IMR-90 (cell line): ENCODE measurements at regions of chr1 and their contacts with region 1.

Region 1: DNA sequence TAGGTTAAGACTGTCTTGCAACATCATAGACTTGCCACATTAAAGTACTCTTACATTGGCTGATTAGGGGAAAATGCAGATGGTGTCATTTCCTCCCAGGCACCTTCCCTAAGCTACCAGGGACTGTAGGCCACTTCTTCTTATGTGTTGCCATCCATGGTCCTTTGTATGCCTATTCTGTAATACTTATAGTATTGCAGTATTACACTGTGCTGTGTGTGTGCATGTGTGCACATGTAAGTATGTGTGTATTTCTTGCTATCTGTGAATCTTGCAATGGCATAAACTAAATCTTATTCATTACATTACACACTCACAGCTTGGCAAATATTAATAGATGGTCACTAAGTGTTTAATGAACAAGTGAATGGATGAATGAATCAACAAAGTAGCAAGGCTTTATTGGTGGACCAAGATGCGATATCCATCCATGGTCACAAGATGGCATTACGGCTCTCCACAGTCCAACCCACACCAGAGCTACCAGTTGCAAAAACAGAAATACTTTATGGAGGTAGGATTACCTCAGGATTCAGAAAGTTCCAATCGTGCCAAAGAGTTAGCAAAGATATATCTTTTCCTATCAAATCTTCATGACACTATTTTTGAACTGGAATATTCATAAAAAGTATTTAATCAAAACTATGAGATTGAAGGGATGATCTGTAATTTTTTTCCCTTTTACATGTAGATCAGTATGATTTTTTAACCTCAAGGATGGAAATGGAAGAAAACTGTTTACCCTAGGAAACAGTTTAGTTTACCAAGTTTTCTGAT is 160.2 kb downstream of the DENND1B start:
- DNase-seq: peak; percentile 51
- ATAC-seq: peak; percentile 91
- H3K4me3 ChIP-seq: no peak overlapping the region
- H3K27ac ChIP-seq: no peak overlapping the region
- H3K4me1 ChIP-seq: 0 out of 2 replicates have a peak, but pooled peaks cover 2% of the 10 kb centered on the region
- H3K27me3 ChIP-seq: no peaks in the 10 kb centered on the region
- CTCF ChIP-seq: peak; percentile 66
- POLR2A ChIP-seq: no peak
- RAD21 ChIP-seq: peak; percentile 78

Region 2: GRCh38 chr1:197725044-197725443 is 109.9 kb after region 1 on chr1:
- CTCF ChIA-PET with region 1: no interaction called
- POLR2A ChIA-PET with region 1: no interaction called
- dilution Hi-C with region 1: no loop called
- in situ Hi-C with region 1: no loop called
- intact Hi-C with region 1: no loop called
- DNase-seq: peak; percentile 31
- ATAC-seq: no peak
- H3K4me3 ChIP-seq: no peak overlapping the region
- H3K27ac ChIP-seq: no peak overlapping the region
- H3K4me1 ChIP-seq: no peaks in the 10 kb centered on the region
- H3K27me3 ChIP-seq: no peaks in the 10 kb centered on the region
- CTCF ChIP-seq: no peak
- POLR2A ChIP-seq: no peak
- RAD21 ChIP-seq: no peak

Region 3: DNA sequence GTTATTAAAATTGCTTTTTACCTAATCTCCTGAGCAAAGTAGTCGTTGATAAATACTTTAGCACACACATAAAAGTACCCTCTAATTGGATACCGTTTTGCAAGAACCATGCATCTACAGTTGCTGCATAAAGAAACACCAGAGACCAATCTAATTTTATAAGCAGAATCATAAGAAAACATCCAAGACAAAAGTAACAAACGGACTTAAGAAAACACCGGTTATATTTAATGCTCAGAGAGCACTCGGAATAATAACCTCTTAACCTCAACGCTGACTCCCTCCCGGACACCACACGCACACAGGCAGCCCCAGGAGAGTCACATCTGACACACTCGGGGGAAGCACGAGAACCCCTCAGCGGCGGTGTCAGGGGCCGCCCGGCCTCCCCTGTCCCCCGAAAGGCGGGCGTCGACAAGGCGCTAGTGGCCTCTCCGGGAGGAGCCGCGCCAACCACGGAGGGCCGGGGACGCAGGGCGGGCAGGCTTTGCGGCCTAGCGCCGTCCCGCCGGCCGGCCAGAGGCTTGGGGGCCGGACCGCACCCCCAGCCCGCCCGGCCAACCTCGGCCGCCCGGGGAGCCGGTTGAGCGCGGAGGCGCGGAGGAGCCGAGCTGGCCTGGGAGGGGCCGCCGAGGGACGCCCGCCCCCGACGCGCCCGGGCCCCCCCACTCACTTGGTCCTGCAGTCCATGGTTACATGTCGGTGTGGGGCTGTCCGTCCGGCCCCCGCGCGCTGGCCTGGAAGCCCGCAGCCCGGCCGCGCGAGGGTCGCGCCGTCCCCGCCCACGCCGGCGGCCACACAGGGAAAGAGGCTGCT is 159.6 kb after region 1 on chr1:
- CTCF ChIA-PET with region 1: no interaction called
- POLR2A ChIA-PET with region 1: no interaction called
- dilution Hi-C with region 1: no loop called
- in situ Hi-C with region 1: no loop called
- intact Hi-C with region 1: loop called (anchors 5 kb)
- DNase-seq: peak; percentile 41
- ATAC-seq: peak; percentile 76
- H3K4me3 ChIP-seq: peak overlapping the region; percentile 73
- H3K27ac ChIP-seq: peak overlapping the region; percentile 86
- H3K4me1 ChIP-seq: peaks cover 7% of the 10 kb centered on the region
- H3K27me3 ChIP-seq: no peaks in the 10 kb centered on the region
- CTCF ChIP-seq: no peak
- POLR2A ChIP-seq: peak; percentile 47; the same call in 1 of the 2 replicates
- RAD21 ChIP-seq: no peak